ENCODE measurements at regions of chr2 and their contacts with region 1.

Region 1: DNA sequence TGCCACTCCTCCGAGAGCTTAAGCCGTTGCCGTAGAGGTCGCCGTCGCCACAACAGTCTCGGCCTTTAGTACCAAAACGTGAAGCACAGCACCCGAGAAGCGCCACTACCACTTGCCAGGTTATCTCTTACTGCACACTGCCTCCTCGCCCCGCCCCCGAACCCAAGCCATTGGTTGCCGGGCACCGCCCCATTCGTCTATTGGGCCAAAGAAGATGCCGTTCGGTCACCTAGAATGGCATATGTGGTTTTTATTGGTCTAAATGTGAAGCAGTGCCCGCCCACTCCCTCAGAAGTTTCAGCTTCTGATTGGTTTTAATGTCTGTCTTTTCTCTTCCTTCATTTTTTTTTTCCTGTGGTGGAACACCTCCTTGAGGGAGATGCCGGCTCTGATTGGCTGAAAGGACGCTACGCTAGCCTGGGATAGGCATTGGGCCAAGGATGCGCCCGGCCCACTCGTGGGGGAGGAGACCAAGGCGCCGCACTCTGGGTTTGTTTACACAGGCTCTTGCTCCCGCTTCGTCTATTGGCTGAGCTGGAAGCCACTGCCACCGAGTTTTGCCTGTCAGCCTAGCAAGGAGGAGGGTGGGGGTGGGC is at the start of gene PAIP2B:
- DNase-seq: peak; percentile 97
- H3K4me3 Mint-ChIP-seq: peak within 1 kb of the TSS; percentile 91
- H3K27ac Mint-ChIP-seq: peak within 1 kb of the TSS; percentile 54
- H3K4me1 Mint-ChIP-seq: peaks cover 12% of the 10 kb centered on the region
- H3K27me3 Mint-ChIP-seq: peaks cover 10% of the 10 kb centered on the region
- total RNA-seq, gene PAIP2B: 0.41 and 0.44 TPM in 2 replicates

Region 2: DNA sequence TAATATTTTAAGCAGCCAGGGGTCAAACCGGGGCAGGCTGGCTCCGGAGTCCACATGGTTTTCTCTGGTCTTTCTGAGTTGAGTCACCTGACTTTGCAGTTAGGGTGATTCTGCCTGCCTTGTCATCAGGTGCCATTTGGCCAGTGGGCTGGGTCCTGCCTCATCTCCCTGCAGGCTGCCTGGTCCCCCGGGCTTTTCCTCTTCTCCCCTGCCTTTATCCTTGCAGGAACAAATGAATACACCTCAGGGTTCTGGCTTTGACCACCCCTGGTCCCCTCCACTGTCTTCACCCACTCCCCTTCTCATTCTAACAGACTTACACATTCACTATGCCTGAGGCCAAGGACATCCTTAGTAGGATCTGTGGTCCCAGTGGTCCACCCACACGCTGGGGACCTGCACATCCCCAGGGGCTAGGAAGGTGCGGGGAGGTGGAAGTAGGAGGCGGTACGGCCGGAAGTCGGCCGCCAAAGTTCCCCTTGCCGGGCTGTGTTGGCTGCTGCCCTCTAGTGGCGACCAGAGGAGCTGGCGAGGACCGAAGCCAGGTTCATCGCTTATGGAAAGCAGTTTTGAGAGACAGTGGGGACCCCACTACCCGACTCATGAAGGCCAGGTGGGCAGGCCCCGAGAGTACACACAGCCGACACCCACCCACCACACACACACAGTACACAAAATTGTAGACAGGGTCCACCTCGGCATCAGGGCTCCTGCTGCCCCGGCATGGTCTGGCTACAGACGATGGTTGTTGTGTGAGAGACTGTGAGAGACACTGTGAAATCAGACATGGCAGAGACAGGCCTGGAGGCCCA is 226.1 kb before region 1 on chr2:
- intact Hi-C with region 1: loop called (anchors 1 kb)
- DNase-seq: peak; percentile 75
- H3K4me3 Mint-ChIP-seq: peak overlapping the region; percentile 54
- H3K27ac Mint-ChIP-seq: peak overlapping the region; percentile 37
- H3K4me1 Mint-ChIP-seq: peaks cover 27% of the 10 kb centered on the region
- H3K27me3 Mint-ChIP-seq: peaks cover 11% of the 10 kb centered on the region

Region 3: DNA sequence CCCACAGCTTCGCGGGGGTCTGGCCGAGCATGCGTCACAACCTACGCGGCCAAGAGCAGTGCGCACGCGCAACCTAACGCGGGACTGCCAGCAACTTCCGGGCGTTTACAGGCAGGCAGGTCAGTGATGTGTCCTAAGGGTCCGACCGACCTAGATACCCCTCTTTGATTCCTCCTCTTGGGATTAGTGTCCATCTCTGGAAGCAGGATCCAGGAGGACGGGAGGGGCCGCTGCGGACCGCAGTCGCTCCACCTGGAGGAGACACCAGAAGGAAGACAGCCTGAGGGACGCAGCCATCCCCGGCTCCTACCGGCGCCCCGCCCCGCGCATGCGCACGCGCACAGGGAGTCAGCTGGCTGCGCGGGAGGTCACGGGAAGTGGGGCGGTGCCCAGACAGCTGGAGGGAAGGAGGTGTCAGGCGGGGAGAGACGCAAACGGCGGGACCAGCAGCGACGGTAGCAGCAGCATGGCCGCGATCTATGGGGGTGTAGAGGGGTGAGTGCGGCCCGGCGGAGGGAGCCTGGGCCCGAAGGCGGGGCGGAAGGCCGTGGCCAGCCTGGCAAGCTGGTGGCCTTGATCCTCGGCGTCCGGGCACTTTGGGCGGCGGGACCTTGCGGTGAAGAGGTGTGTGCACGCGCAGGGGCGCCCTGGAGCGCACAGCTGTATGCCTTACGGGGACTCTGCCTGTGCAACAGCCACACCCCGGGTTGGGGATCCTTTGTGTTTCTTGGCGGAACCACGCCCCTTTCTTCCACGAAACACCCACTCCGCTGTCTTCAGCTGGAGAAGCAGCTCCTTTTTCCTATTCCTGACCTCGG is 158.6 kb before region 1 on chr2 and contains the start of gene NAGK:
- intact Hi-C with region 1: loop called (anchors 1 kb)
- DNase-seq: peak; percentile 98
- H3K4me3 Mint-ChIP-seq: peak within 1 kb of the TSS; percentile 93
- H3K27ac Mint-ChIP-seq: peak within 1 kb of the TSS; percentile 97
- H3K4me1 Mint-ChIP-seq: peaks cover 55% of the 10 kb centered on the region
- H3K27me3 Mint-ChIP-seq: no peaks in the 10 kb centered on the region
- total RNA-seq, gene NAGK: 75.2 and 83.2 TPM in 2 replicates

Region 4: DNA sequence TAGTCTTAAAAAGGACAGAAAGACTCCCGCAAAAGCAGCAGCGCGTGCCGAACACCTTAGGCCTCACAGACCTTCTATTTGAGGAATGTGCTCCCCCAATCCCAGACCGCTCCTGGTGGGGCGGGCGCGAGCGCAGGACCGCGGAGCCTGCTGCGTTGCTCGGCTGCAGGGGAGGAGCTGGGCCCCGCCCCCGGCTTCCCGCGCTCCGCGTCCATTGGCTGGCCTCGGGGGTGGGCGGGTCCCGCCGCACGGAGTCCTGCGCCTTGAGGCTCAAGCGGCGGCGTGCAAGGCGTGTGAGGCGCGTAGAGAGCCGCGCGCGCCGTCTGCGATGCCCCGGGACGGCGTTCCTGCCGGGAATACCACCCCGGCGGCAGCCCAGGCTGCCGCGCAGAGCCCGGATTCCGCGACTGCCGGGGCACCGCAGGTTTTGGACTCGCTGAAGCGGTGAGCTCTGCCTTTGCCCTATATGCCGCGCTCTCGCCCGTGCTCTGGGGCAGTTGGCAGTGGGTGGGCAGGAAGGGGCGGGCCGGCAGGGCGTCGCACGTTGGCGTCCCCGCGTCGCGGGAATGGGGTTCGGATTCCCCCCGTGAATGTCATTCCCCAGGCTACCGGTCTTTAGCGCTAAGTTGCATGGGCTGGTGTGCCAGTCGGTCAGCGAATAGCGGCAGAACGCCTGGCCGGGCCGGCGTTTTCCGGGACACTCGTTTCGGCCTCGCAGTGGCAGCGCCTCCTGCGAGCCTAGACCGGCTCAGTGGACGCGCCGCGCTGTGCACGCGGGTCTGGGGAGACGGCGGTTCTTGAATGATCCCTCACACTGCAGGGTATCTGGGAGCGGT is 49.5 kb after region 1 on chr2:
- intact Hi-C with region 1: loop called (anchors 1 kb)
- DNase-seq: peak; percentile 88
- H3K4me3 Mint-ChIP-seq: peak overlapping the region; percentile 76
- H3K27ac Mint-ChIP-seq: no peak overlapping the region
- H3K4me1 Mint-ChIP-seq: peaks cover 8% of the 10 kb centered on the region
- H3K27me3 Mint-ChIP-seq: peaks cover 69% of the 10 kb centered on the region

Region 5: DNA sequence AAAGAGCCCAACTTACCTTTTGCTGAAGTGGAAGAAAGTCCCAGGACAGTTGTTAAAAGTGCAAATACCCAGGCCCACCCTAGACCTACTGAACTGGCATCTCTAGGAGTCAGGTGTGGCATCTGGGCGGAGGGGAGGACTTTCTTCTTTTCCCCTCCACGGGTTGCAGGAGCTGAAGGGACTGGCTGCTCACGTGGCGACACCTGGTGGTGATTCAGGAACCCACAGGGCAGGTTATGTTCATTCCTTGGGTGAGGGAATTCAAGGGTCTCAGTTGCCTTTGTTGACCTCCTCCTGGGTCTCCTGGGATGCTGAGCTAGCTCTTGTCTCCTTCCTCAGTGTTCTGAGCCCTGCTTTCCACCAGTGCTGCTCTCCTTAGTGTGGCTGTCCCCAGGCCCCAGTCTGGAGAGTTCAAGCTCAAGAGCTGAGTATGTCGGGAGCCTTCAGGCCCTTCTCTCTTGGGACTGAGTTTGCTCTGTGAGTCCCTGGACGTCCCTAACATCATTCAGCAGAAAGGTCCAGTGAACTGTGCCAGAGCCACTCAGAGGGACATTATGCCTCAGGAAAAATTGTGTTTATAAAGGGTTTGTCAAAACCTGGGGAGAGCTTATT is 283.2 kb after region 1 on chr2:
- intact Hi-C with region 1: loop called (anchors 1 kb)
- DNase-seq: peak; percentile 48
- H3K4me3 Mint-ChIP-seq: no peak overlapping the region
- H3K27ac Mint-ChIP-seq: no peak overlapping the region
- H3K4me1 Mint-ChIP-seq: peaks cover 5% of the 10 kb centered on the region
- H3K27me3 Mint-ChIP-seq: peaks cover 7% of the 10 kb centered on the region

Region 6: GRCh38 chr2:71727567-71727966 is 500.5 kb after region 1 on chr2:
- intact Hi-C with region 1: no loop called
- DNase-seq: no peak
- H3K4me3 Mint-ChIP-seq: no peak overlapping the region
- H3K27ac Mint-ChIP-seq: no peak overlapping the region
- H3K4me1 Mint-ChIP-seq: no peaks in the 10 kb centered on the region
- H3K27me3 Mint-ChIP-seq: no peaks in the 10 kb centered on the region